GM12878 (cell line): ENCODE measurements at regions of chr6 and their contacts with region 1.

Region 1: DNA sequence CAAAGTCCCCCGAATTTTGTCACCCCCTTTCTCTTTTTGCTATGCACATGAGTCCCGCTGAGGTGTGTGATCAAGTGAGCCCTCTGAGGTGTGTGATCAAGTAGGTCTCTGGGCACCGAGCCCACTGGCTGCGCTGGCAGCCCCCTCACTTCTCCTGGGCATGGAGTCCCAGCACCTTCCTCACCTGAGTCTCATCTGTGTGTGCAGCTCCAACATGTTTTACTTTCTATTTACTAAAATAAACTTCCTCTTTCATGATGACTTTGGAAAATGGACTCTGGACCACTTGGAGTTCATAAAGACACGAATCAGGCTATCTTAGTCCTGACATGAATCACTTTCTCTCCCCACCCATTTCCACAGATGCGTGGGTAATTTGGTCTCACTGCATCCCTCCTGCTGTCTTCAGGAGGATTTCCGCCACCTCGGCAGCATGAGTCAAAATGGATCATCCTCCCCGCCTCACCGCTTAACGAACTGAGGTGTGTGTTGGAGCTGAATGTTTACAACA is 39.8 kb downstream of the PRDM1 start:
- DNase-seq: peak; percentile 62
- ATAC-seq: peak; percentile 75
- H3K4me3 ChIP-seq: peak overlapping the region; percentile 38; the same call in 1 of the 2 replicates
- H3K27ac ChIP-seq: peak overlapping the region; percentile 55
- H3K4me1 ChIP-seq: peaks cover 46% of the 10 kb centered on the region
- H3K27me3 ChIP-seq: peaks cover 0 to 2% of the 10 kb centered on the region in 2 experiments; a peak in 1 of 4 replicates
- CTCF ChIP-seq: no peak
- EP300 ChIP-seq: no peak
- POLR2A ChIP-seq: no peak
- RAD21 ChIP-seq: no peak

Region 2: DNA sequence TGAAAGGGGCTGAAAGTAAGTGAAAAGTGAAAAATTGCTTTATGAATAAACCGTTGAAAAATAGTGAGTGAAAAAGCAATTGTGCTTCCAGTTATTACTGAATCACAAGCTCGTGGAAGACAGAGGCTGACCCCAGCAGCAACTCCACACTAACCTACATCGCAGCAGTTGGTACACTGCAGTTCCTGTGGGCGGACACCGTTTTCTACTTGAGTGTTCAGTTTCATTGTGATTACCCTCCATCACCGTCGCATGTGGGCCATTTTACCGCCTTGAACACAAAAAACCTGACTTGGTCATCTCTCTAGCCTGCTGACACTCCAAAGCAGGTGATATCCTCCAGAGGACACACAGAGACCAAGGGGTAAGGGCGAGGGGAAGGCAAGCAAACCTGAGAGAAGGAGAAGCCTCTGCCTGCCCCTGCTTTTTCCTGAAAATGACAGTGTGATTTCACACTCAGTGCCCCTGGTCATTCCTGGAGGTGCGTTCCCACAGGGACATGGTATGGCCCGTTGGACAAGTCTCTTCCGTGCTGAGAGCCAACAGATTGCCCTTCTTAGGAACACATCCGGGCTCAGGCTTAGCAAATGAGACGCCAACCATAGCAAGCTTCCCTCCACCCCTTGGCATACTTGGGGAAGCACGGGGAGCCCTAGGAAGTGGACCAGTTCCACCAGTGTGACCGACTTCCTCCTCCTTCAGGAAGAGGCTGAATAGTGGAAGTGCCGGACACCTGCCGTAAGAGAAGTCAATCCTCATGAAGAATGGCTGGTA is 11.3 kb before region 1 on chr6:
- CTCF ChIA-PET with region 1: interaction called, 5 read pairs
- POLR2A ChIA-PET with region 1: interaction called, 4 read pairs
- RAD21 ChIA-PET with region 1: interaction called, 4 read pairs
- SMC1A ChIA-PET with region 1: interaction called, 10 read pairs
- in situ Hi-C with region 1: no loop called
- intact Hi-C with region 1: no loop called
- DNase-seq: peak; percentile 62
- ATAC-seq: peak; percentile 92
- H3K4me3 ChIP-seq: 0 out of 2 replicates have a peak overlapping the region, but pooled peaks have one; percentile 2
- H3K27ac ChIP-seq: peak overlapping the region; percentile 63
- H3K4me1 ChIP-seq: peaks cover 44% of the 10 kb centered on the region
- H3K27me3 ChIP-seq: peaks cover 0 to 2% of the 10 kb centered on the region in 2 experiments; a peak in 1 of 4 replicates
- CTCF ChIP-seq: no peak; a peak in 1 of 6 replicates
- EP300 ChIP-seq: peak in 1 of 2 experiments; percentile 52; a peak in 1 of 4 replicates
- POLR2A ChIP-seq: no peak
- RAD21 ChIP-seq: no peak

Region 3: DNA sequence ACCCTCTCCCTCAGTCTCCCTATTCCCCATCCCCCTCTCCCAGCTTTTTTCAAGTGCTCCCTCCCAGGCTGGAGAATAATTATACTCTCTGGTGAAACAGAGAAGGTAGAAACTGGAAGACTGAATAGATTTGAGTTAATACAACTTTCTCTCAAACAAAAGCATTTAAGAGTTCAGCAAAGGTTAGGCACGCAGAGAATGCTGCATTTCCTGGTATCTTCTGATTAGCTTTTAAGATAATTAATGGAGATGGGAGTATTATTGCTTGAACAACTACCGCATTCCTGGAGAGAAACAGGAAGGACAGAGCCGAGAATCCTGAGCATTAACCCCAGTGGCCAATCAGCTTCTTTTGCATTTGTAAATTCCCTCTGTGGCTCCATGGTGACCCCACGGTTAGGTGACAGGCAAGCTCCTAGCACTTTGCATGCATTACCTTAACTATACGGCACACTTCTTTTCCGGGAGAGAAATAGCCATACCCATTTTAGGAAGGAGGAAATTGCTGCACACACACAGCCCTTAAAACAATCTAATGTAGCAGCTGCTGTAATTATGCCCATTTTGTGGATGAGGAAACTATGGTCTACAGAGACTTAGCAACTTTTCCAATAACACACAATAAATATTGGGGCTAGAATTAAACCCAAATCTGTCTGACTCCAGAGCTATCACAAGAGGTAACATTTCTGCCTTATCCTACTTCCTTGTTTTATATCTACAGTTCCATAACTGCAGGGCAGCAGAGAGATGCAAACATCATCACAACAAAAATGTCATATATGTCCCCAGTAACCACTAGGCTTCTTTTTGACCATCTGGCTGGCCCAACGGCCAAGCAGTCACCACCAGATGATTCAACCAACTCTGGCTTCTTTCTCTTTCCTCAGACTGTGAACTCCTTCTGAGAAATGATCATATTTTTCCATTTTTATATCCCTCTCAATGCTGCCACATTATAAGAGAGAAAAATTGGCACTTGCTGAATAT is 678.7 kb after region 1 on chr6:
- CTCF ChIA-PET with region 1: no interaction called
- POLR2A ChIA-PET with region 1: no interaction called
- RAD21 ChIA-PET with region 1: no interaction called
- SMC1A ChIA-PET with region 1: no interaction called
- in situ Hi-C with region 1: no loop called
- intact Hi-C with region 1: no loop called
- DNase-seq: no peak
- ATAC-seq: no peak
- H3K4me3 ChIP-seq: no peak overlapping the region
- H3K27ac ChIP-seq: no peak overlapping the region
- H3K4me1 ChIP-seq: no peaks in the 10 kb centered on the region
- H3K27me3 ChIP-seq: no peaks in the 10 kb centered on the region
- CTCF ChIP-seq: no peak
- EP300 ChIP-seq: no peak
- POLR2A ChIP-seq: no peak
- RAD21 ChIP-seq: no peak